ENCODE measurements at regions of chr6 and their contacts with region 1.

Region 1: GRCh38 chr6:119078376-119079282 is at the start of gene FAM184A:
- DNase-seq: peak; percentile 80
- total RNA-seq, gene FAM184A: 0.40 TPM

Region 2: DNA sequence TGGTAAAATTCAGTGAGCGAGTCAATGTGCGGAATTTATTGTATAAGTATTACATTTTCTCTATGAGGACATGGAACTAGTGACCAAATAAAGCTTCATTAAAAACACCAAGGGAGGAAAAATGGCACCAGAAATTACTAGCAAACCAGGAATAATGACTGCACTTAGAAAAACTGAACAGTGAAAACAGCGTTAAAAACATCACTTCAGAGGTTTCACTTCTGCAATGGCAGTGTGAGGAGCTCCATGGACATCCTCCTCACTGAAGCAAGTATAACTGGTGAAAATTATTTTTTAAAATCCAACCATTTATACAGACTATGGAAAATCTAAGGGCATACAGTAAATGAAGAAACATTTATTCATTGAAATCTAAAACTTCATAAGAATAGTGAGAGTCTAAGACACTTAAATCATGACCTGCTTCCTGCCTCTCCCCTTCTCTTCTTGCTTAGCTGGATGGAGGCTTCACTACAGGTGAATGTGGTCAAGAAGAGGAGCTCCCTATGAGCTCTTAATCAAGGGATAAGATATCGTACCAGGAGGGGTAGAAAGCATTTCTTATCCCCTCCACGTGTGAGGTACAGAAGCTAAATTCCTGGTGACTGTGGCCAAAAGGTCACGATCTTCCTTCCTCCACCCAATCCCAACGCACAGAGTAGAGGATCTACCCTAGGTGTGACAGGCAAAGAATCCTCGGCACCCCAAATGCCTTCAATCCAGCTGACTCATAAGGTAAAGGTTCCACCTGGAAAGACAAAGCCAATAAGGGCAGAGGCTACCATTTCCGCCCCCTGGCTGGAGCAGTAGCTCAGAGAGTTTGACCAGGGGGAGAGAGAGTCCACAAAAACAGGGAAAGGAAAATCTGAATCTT is 197.0 kb before region 1 on chr6:
- intact Hi-C with region 1: no loop called
- DNase-seq: no peak

Region 3: GRCh38 chr6:118980063-118980462 is 98.6 kb before region 1 on chr6:
- intact Hi-C with region 1: no loop called
- DNase-seq: no peak

Region 4: GRCh38 chr6:119034827-119035458 is 43.7 kb before region 1 on chr6:
- intact Hi-C with region 1: loop called (anchors 5 kb)
- DNase-seq: no peak

Region 5: GRCh38 chr6:119052292-119052889 is 26.2 kb before region 1 on chr6:
- intact Hi-C with region 1: no loop called
- DNase-seq: no peak

Region 6: GRCh38 chr6:119314885-119315272 is 236.2 kb after region 1 on chr6:
- intact Hi-C with region 1: no loop called
- DNase-seq: no peak

Measured in cardiac septum (tissue), 1 donor.